ENCODE measurements at regions of chr11 and their contacts with region 1.

Region 1: DNA sequence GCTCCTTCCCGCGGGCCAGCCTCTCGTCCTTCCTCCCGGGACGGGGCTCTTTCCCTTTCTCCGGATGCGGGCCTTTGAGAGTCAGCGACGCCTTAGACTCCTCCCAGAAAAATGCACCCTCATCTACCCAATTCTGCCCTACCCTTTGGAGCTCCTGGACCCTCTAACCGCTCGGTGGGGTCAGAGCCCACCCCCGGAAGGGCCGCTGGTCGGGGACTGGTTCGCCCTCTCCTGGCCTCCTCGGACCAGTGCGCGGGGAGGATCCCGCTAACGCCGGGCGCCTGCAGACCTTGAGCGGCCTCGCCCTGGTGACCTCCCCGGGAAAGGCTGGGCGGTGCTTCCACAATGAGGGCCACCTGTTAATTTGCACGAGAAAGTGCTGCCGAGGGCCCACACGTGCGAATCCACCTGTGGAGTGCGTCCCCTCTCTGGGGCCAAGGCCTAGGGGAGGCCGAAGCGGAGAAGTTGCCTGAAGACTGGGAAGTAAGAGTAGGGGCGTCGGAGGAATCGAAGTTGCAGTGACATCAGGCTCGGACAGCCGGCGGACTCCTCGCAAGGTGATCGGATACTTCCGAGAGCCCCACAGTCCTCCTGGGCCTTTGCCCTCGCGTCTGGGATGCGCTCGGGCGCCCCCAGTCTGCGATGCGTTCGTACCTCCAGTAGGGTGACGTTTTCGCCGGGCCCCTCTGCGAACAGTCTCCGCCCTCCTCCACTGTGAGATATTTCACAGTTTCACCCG is 61.5 kb downstream of the ENDOD1 start:
- DNase-seq: peak; percentile 92 to 95 (median 94)
- H3K4me3 ChIP-seq: peak overlapping the region; percentile 67
- H3K27ac ChIP-seq: peak overlapping the region; percentile 65 to 82
- H3K4me1 ChIP-seq: peaks cover 6% of the 10 kb centered on the region
- H3K27me3 ChIP-seq: no peaks in the 10 kb centered on the region
- CTCF ChIP-seq: peak; percentile 90 to 96 (median 93)
- EP300 ChIP-seq: no peak
- POLR2A ChIP-seq: peak; percentile 75

Region 2: DNA sequence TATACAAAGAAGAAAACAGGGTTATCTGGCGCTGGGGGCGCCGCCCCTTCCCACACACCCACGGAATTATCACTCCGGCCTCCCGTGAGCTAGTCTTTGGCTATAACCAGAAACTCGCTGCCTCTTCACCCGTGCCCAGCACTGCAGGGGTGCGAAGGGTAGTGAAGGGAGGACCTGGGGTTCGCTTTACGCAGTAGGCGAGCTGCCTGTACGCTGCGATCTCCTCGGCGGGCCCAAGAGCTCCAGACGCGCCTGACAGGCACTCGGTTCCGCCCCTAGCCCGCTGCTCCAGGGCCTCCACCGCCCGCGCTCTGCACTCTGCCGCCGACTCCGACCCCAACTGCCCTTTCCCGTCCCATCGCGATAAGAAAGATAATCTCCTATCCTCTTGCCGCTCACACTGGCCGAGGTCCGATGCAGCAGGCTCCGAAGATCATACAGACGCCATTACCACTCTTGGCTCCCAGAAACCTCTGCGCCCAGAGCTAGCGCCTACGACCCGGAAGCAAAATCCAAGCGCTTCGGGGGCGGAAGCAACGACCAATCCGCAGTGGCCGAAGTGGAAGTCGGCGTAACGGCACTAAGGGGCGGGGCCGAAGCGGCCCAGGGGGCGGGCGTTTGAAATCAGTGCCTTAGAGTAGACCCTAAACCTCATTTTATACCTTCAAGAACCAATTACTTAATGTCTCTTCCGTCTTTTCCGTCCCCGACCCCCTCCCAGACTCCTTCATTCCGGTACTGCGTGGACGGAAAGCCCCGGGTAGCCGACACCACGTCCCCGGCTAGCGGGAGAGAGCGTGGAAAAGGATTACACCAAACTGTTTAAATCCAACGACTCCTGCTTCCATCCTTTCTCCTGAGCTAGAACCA is 177.8 kb before region 1 on chr11 and contains the starts of genes CWC15 and KDM4D:
- intact Hi-C with region 1: loop called in 1 of 4 experiments (anchors 10 kb)
- DNase-seq: peak; percentile 94 to 96 (median 95)
- H3K4me3 ChIP-seq: peak within 1 kb of the TSS; percentile 73
- H3K27ac ChIP-seq: peak within 1 kb of the TSS; percentile 54 to 62
- H3K4me1 ChIP-seq: peaks cover 3% of the 10 kb centered on the region
- H3K27me3 ChIP-seq: no peaks in the 10 kb centered on the region
- CTCF ChIP-seq: no peak
- EP300 ChIP-seq: no peak
- POLR2A ChIP-seq: peak; percentile 49
- total RNA-seq, gene CWC15: 35.8 to 65.8 (median 56.0) TPM
- total RNA-seq, gene KDM4D: 0.24 to 1.9 (median 1.0) TPM

Region 3: DNA sequence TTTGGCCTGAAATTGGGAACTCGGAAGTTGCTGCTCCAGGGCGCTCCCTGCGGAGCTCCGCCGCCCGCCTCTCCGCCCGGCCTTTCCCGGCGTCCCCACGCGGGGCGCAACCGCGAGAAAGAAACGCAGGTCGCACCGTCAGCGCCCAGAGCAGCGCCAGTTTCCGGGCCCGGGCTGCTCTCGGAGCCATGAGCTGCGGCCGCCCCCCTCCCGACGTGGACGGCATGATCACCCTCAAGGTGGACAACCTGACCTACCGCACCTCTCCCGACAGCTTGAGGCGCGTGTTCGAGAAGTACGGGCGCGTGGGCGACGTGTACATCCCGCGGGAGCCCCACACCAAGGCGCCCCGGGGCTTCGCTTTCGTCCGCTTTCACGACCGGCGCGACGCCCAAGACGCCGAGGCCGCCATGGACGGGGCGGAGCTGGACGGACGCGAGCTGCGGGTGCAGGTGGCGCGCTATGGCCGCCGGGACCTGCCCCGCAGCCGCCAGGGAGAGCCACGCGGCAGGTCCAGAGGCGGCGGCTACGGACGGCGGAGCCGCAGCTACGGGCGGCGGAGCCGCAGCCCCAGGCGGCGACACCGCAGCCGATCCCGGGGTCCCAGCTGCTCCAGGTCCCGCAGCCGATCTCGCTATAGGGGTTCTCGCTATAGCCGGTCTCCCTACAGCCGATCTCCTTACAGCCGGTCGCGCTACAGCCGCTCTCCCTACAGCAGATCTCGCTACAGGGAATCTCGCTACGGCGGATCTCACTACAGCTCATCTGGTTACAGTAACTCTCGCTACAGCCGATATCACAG is 83.9 kb before region 1 on chr11:
- intact Hi-C with region 1: loop called (anchors 1 to 10 kb)
- DNase-seq: peak; percentile 85 to 93 (median 88)
- H3K4me3 ChIP-seq: peak overlapping the region; percentile 71
- H3K27ac ChIP-seq: peak overlapping the region; percentile 98 to 99
- H3K4me1 ChIP-seq: peaks cover 1% of the 10 kb centered on the region
- H3K27me3 ChIP-seq: no peaks in the 10 kb centered on the region
- CTCF ChIP-seq: peak; percentile 67 to 83 (median 73)
- EP300 ChIP-seq: no peak
- POLR2A ChIP-seq: peak; percentile 44

Region 4: DNA sequence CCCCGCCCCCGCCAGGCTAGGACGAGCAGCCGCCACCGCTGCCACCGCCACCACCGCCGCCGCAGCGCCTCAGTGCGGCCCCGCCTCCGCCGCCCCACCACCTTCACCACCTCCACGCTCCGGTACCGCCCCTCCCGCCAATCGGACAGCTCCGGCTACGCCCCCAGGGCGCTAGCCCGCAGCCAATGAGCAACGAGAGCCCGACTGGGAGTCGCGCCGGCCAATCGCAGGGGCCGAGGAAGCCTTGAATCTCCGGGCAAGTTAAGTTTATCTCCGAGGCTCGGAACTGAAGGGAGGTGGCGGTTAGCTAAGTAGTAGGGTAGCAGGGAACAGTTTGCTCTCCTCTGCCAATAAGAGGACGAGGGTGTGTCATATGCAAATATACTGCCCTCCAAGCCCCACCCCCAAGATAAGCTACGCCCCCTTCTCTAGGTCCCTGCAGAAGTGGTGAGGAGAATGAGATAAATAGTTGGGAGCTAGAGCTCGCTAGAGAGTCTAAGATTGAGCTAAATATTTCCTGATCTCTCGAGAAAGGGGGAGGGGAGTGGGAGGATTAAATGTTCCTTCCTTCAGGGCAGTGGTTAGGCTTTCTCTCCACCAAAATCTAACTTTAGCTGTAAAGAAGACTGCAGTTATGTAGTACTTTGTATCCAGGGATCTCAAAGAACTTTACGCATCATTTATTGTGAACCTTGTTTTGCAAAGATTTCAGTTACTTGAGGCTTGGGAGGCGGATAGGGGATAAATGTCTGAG is 80.2 kb after region 1 on chr11 and contains the start of gene SESN3:
- intact Hi-C with region 1: loop called in 3 of 4 experiments (anchors 5 to 10 kb)
- DNase-seq: peak; percentile 98 to 99 (median 98)
- H3K4me3 ChIP-seq: peak within 1 kb of the TSS; percentile 89
- H3K27ac ChIP-seq: peak within 1 kb of the TSS; percentile 89 to 90
- H3K4me1 ChIP-seq: peaks cover 3% of the 10 kb centered on the region
- H3K27me3 ChIP-seq: no peaks in the 10 kb centered on the region
- CTCF ChIP-seq: peak in 2 of 3 donors; percentile 23 to 34
- EP300 ChIP-seq: no peak
- POLR2A ChIP-seq: peak; percentile 73
- total RNA-seq, gene SESN3: 37.1 to 77.3 (median 49.4) TPM

Region 5: DNA sequence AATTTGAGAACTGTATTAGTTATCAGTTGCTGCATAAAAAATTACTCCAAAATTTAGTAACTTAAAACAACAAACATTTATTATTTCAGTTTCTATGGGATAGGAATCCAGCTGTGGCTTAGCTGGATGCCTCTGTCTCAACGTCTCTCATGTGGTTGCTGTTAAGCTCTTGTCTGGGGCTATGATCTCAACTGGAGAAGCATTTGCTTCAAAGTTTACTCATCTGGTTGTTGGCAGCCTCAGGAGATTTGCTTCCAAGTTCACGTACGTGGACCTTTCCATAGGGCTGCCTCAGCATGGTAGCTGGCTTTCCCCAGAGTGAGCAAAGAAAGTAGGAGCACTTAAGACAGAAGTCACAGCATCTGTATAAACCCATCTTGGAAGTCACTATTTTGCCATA is 224.8 kb after region 1 on chr11:
- intact Hi-C with region 1: no loop called
- DNase-seq: no peak
- H3K4me3 ChIP-seq: no peak overlapping the region
- H3K27ac ChIP-seq: no peak overlapping the region
- H3K4me1 ChIP-seq: no peaks in the 10 kb centered on the region
- H3K27me3 ChIP-seq: no peaks in the 10 kb centered on the region
- CTCF ChIP-seq: no peak
- EP300 ChIP-seq: no peak
- POLR2A ChIP-seq: no peak

Region 6: GRCh38 chr11:95764267-95764898 is 613.3 kb after region 1 on chr11:
- intact Hi-C with region 1: loop called (anchors 5 kb)
- DNase-seq: no peak
- H3K4me3 ChIP-seq: no peak overlapping the region
- H3K27ac ChIP-seq: no peak overlapping the region
- H3K4me1 ChIP-seq: no peaks in the 10 kb centered on the region
- H3K27me3 ChIP-seq: no peaks in the 10 kb centered on the region
- CTCF ChIP-seq: peak; percentile 16 to 92 (median 71)
- EP300 ChIP-seq: no peak
- POLR2A ChIP-seq: no peak